ENCODE measurements at regions of chr3 and their contacts with region 1.

Region 1: GRCh38 chr3:141875374-141875892 is 1.0 kb upstream of the ATP1B3 start:
- DNase-seq: peak; percentile 84
- H3K4me3 ChIP-seq: peak overlapping the region; percentile 67 to 98 (median 88)
- H3K27ac ChIP-seq: peak overlapping the region; percentile 88
- H3K4me1 ChIP-seq: peaks cover 18% of the 10 kb centered on the region
- H3K27me3 ChIP-seq: no peaks in the 10 kb centered on the region
- CTCF ChIP-seq: peak; percentile 83 to 89
- POLR2A ChIP-seq: no peak

Region 2: DNA sequence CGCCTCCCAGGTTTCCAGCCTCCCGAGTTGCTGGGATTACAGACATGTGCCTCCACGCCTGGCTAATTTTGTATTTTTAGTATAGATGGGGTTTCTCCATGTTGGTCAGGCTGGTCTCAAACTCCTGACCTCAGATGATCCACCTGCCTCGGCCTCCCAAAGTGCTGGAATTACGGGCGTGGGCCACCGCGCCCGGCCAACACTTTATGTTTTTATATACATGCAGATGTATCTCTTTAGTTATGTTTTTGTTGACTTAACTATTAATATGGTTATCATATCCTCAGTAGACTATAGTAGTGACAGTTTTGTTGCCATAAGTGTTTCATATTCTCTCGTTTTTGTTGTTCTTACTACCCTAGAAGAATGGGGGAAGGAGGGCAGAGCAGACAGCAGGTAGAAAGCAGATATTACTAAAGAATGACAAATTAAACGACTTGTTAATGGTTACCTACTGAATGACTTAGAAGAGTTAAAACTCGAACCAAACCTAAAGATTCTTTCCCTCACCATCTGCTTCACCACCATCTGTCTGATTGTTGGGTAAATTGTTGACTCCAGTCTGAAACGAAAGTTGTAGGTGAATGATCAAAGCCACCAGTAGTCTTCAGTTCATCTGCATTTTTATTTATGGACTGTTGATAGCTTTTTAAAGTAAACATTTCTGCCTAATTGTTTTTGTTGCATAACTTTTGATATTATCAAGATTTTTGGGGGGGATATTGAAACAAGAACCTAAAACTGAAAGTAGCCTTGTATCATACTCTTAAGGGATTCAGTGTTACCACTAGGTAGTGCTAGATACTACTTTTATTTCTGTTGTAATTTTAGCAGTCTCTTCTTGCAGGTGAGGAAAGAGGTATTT is 299.3 kb before region 1 on chr3:
- CTCF ChIA-PET with region 1: no interaction called
- POLR2A ChIA-PET with region 1: no interaction called
- dilution Hi-C with region 1: no loop called
- intact Hi-C with region 1: loop called (anchors 1 kb)
- DNase-seq: peak; percentile 43
- H3K4me3 ChIP-seq: no peak overlapping the region
- H3K27ac ChIP-seq: no peak overlapping the region
- H3K4me1 ChIP-seq: no peaks in the 10 kb centered on the region
- H3K27me3 ChIP-seq: no peaks in the 10 kb centered on the region
- CTCF ChIP-seq: peak; percentile 21
- POLR2A ChIP-seq: no peak

Region 3: GRCh38 chr3:141738022-141738890 is 137.2 kb before region 1 on chr3 and contains the start of gene RNF7:
- CTCF ChIA-PET with region 1: interaction called, 34 read pairs
- POLR2A ChIA-PET with region 1: no interaction called
- dilution Hi-C with region 1: no loop called
- intact Hi-C with region 1: loop called (anchors 1 kb)
- DNase-seq: peak; percentile 96
- H3K4me3 ChIP-seq: peak within 1 kb of the TSS; percentile 39 to 96 (median 85)
- H3K27ac ChIP-seq: peak within 1 kb of the TSS; percentile 72
- H3K4me1 ChIP-seq: peaks cover 19% of the 10 kb centered on the region
- H3K27me3 ChIP-seq: peaks cover 0 to 2% of the 10 kb centered on the region in 2 experiments
- CTCF ChIP-seq: peak; percentile 91 to 98
- POLR2A ChIP-seq: peak; percentile 76
- total RNA-seq, gene RNF7: 121 and 136 TPM in 2 replicates

Region 4: DNA sequence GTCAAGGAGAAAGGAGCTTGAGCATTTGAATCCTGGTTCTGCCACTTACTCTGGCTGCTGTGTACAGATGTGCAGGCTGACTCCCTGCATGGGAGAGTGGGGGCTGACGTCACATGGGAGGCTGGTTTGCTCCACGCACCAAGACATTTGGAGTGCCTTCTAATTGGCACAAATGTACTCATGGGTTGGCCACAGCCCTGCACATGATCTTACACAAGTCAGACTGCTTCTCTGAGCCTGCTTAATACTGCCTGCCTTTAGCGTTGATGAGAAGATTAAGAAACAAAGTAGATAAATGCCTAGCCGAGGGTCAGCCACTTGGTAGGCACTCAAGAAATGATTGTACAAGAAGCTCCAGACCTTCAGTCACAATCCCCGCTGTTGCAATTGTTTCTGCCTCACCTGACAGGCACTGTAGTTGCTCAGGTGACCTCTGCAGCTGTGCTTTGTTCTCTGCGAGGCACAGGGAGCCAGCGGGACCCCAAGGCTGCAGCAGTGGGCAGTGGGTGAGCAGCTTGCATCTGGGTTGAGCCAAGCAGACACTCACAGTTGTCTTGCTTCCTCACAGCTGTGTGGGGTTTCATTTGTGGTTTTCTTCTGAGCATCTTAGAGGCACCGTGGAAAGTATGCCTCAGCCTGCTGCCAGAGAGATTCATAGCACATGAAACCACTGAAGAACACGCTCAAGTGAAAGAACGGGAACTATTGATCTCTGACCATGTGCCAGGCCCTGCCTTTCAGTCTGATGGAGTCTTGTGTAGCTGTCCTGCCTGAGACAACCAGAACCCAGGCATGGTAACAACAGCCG is 79.1 kb before region 1 on chr3:
- CTCF ChIA-PET with region 1: interaction called, 17 read pairs
- POLR2A ChIA-PET with region 1: interaction called, 5 read pairs
- dilution Hi-C with region 1: no loop called
- intact Hi-C with region 1: loop called (anchors 1 kb)
- DNase-seq: peak; percentile 6
- H3K4me3 ChIP-seq: no peak overlapping the region
- H3K27ac ChIP-seq: no peak overlapping the region
- H3K4me1 ChIP-seq: peaks cover 16% of the 10 kb centered on the region
- H3K27me3 ChIP-seq: no peaks in the 10 kb centered on the region
- CTCF ChIP-seq: no peak
- POLR2A ChIP-seq: no peak

Region 5: GRCh38 chr3:141851411-141851810 is 24.0 kb before region 1 on chr3:
- CTCF ChIA-PET with region 1: interaction called, 11 read pairs
- POLR2A ChIA-PET with region 1: no interaction called
- dilution Hi-C with region 1: no loop called
- intact Hi-C with region 1: no loop called
- DNase-seq: peak; percentile 87
- H3K4me3 ChIP-seq: no peak overlapping the region
- H3K27ac ChIP-seq: no peak overlapping the region
- H3K4me1 ChIP-seq: peaks cover 9% of the 10 kb centered on the region
- H3K27me3 ChIP-seq: no peaks in the 10 kb centered on the region
- CTCF ChIP-seq: no peak
- POLR2A ChIP-seq: no peak

Region 6: GRCh38 chr3:141913150-141913811 is 37.8 kb after region 1 on chr3:
- CTCF ChIA-PET with region 1: interaction called, 23 read pairs
- POLR2A ChIA-PET with region 1: no interaction called
- dilution Hi-C with region 1: no loop called
- intact Hi-C with region 1: no loop called
- DNase-seq: peak; percentile 71
- H3K4me3 ChIP-seq: no peak overlapping the region
- H3K27ac ChIP-seq: no peak overlapping the region
- H3K4me1 ChIP-seq: no peaks in the 10 kb centered on the region
- H3K27me3 ChIP-seq: no peaks in the 10 kb centered on the region
- CTCF ChIP-seq: peak; percentile 54 to 56
- POLR2A ChIP-seq: no peak

Region 7: DNA sequence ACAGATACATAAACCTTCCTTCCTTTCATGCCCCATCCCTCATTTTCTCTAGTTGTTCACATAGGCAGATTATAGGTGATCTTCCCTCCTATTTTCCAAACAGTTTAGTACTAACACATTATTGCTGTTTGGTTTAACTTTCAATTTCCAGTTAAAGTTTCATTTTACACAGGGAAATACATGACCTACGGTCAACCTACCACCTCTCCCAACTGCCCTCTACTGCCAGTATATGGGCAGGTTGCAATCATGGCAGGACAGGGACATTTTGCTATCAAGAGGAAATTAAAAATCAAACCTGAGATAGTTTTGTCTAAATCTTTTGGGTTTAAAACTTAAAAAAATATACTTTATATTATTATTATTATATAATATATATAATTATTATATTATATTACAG is 300.0 kb after region 1 on chr3:
- CTCF ChIA-PET with region 1: no interaction called
- POLR2A ChIA-PET with region 1: no interaction called
- dilution Hi-C with region 1: no loop called
- intact Hi-C with region 1: no loop called
- DNase-seq: no peak
- H3K4me3 ChIP-seq: no peak overlapping the region
- H3K27ac ChIP-seq: no peak overlapping the region
- H3K4me1 ChIP-seq: no peaks in the 10 kb centered on the region
- H3K27me3 ChIP-seq: no peaks in the 10 kb centered on the region
- CTCF ChIP-seq: no peak
- POLR2A ChIP-seq: no peak